Esophagus squamous epithelium (tissue), 5 donors: ENCODE measurements at regions of chr17 and their contacts with region 1.

Region 1: GRCh38 chr17:40846515-40847155 is 20.4 kb downstream of the KRT12 start:
- DNase-seq: no peak
- H3K4me3 ChIP-seq: no peak overlapping the region
- H3K27ac ChIP-seq: no peak overlapping the region
- H3K4me1 ChIP-seq: peaks cover 0 to 14% (median 0%) of the 10 kb centered on the region in 3 donors
- H3K27me3 ChIP-seq: peaks cover 0 to 45% (median 0%) of the 10 kb centered on the region in 4 donors
- CTCF ChIP-seq: no peak
- POLR2A ChIP-seq: no peak

Region 2: GRCh38 chr17:40922239-40922638 is 75.6 kb after region 1 on chr17:
- intact Hi-C with region 1: no loop called
- DNase-seq: no peak
- H3K4me3 ChIP-seq: no peak overlapping the region
- H3K27ac ChIP-seq: peak overlapping the region in 1 of 4 donors; percentile 40
- H3K4me1 ChIP-seq: peaks cover 0 to 11% (median 5%) of the 10 kb centered on the region in 3 donors
- H3K27me3 ChIP-seq: peaks cover 0 to 21% (median 0%) of the 10 kb centered on the region in 4 donors
- CTCF ChIP-seq: no peak
- POLR2A ChIP-seq: no peak

Region 3: GRCh38 chr17:40963838-40964237 is 117.2 kb after region 1 on chr17:
- intact Hi-C with region 1: loop called (anchors 5 kb)
- DNase-seq: no peak
- H3K4me3 ChIP-seq: no peak overlapping the region
- H3K27ac ChIP-seq: peak overlapping the region in 1 of 4 donors; percentile 26
- H3K4me1 ChIP-seq: peaks cover 0 to 18% (median under 1%) of the 10 kb centered on the region in 3 donors
- H3K27me3 ChIP-seq: no peaks in the 10 kb centered on the region
- CTCF ChIP-seq: peak; percentile 32 to 81 (median 67)
- POLR2A ChIP-seq: no peak

Region 4: DNA sequence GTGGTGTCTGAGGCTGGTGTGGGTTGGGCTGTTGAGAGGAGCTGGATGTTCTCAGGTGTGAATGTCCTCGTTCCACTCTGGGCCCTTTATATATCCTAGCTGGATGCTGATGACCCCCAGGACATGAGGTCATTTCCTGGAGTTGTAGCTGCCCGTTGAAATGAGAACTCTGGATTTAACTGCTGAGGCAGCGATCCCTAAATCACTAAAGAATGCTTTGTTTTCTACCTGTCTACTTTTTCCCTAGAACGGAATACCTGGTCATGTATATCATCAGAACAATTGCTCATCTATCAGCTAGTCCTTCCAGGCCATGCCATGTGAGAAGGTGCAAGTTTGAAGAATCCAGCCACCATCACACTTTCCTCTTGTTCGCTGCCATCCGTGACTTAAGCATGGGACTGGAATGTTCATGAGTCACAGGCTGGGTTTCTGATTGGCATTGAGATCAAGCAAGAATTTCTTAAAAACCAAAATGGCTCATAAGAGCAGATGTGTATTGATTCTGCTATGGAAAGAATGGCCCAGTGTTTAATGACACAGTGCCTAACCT is 213.5 kb after region 1 on chr17 and contains the start of gene KRTAP2-3:
- intact Hi-C with region 1: no loop called
- DNase-seq: no peak
- H3K4me3 ChIP-seq: no peak within 1 kb of the TSS
- H3K27ac ChIP-seq: no peak within 1 kb of the TSS
- H3K4me1 ChIP-seq: no peaks in the 10 kb centered on the region
- H3K27me3 ChIP-seq: peaks cover 0 to 15% (median 0%) of the 10 kb centered on the region in 4 donors
- CTCF ChIP-seq: no peak
- POLR2A ChIP-seq: no peak
- total RNA-seq, gene KRTAP2-3: not detected